ENCODE measurements at regions of chr7 and their contacts with region 1.

Region 1: GRCh38 chr7:137626469-137627067 is 220.2 kb downstream of the DGKI start:
- DNase-seq: peak; percentile 56
- H3K4me3 Mint-ChIP-seq: no peak overlapping the region
- H3K27ac Mint-ChIP-seq: no peak overlapping the region
- H3K4me1 Mint-ChIP-seq: no peaks in the 10 kb centered on the region
- H3K27me3 Mint-ChIP-seq: peaks cover 8% of the 10 kb centered on the region

Region 2: DNA sequence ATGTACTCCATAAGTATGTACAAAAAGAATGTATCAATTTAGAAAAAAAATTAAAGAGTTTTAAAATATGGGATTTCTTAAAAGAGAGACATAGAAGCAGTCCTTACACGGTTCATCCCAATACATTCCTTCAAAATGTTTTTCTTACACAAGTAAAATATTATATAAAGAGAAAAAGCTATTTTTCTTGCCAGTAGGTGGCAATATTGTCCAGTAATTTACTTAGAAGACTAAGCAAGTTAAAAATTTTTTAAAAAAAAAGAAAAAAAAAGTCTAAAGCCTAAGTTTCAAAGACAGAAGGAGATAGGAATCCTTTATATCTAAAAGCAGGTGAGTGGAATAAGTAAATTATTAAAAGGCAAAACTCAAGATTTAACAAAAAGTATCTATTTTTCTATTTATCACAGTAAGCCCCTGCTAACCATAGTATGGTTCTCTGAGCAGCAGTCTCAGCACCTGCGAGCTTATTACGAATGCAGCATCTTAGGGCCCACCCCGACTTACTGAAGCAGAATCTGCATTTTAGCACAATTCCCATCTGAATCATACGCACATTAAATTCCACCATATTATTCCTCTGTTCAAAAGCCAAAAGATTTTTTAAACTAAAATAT is 20.4 kb before region 1 on chr7:
- CTCF ChIA-PET with region 1: interaction called, 33 read pairs
- POLR2A ChIA-PET with region 1: no interaction called
- intact Hi-C with region 1: loop called (anchors 2 kb)
- DNase-seq: no peak
- H3K4me3 Mint-ChIP-seq: no peak overlapping the region
- H3K27ac Mint-ChIP-seq: no peak overlapping the region
- H3K4me1 Mint-ChIP-seq: no peaks in the 10 kb centered on the region
- H3K27me3 Mint-ChIP-seq: peaks cover 10% of the 10 kb centered on the region

Measured in activated CD4-positive, alpha-beta memory T cell treated with anti-CD3 and anti-CD28 coated beads for 36 hours (primary cell).